ENCODE measurements at regions of chr6 and their contacts with region 1.

Region 1: DNA sequence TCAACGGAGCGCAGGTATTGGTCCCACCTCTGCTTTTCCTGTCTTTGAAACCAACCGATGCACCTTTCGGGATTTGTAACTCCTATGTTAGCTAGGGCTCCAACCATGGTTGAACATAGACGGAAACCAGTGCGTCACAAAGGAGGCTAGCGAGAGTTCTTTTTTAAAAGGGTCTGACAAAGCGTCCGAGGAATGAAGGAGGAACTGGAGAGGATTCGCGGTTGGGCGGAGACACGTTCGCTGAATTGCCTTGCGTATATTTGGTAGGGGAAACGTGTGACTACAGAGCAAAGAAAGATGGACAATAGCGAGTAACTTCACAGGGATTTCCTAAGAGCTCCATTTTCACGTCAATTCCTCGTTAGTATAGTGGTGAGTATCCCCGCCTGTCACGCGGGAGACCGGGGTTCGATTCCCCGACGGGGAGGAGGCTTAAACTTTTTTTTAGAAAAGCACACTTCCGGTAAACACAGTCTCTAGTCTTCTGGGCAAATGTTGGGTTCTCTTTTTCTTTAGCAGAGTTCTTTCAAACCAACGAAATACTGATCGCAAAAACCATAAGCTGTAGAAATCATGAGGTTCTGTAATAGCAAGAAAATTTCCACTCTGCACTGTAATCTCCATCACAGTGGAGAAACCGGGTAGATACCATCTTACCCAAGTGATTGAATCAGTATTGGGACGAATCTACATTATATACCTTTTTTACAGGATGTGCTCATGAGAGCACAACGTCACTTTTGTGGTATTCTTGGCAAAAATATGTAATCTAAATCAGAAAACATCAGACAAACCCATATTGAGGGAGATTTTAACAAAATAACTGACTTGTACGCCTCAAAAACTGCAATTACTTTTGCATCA is 6.6 kb upstream of the ZNF184 start:
- DNase-seq: peak; percentile 84 to 97 (median 95)
- ATAC-seq: peak; percentile 83
- H3K4me3 ChIP-seq: peak overlapping the region; percentile 95
- H3K4me3 Mint-ChIP-seq: no peak overlapping the region
- H3K27ac ChIP-seq: peak overlapping the region; percentile 97
- H3K27ac Mint-ChIP-seq: no peak overlapping the region
- H3K4me1 ChIP-seq: peaks cover 9 to 12% of the 10 kb centered on the region in 2 donors
- H3K4me1 Mint-ChIP-seq: peaks cover 0 to 9% (median 5%) of the 10 kb centered on the region in 7 donors
- H3K27me3 ChIP-seq: no peaks in the 10 kb centered on the region
- H3K27me3 Mint-ChIP-seq: peaks cover 0 to 17% (median 0%) of the 10 kb centered on the region in 5 donors

Region 2: GRCh38 chr6:26312501-26313390 is 1166.8 kb before region 1 on chr6:
- CTCF ChIA-PET with region 1: no interaction called
- POLR2A ChIA-PET with region 1: no interaction called
- intact Hi-C with region 1: loop called in 1 of 2 experiments (anchors 2 kb)
- DNase-seq: peak; percentile 64 to 91 (median 86)
- ATAC-seq: peak; percentile 75
- H3K4me3 ChIP-seq: peak overlapping the region; percentile 81
- H3K4me3 Mint-ChIP-seq: peak overlapping the region; percentile 83 to 100 (median 96)
- H3K27ac ChIP-seq: peak overlapping the region; percentile 55
- H3K27ac Mint-ChIP-seq: peak overlapping the region; percentile 82 to 100 (median 96)
- H3K4me1 ChIP-seq: peaks cover 4 to 19% of the 10 kb centered on the region in 2 donors
- H3K4me1 Mint-ChIP-seq: peaks cover 5 to 51% (median 37%) of the 10 kb centered on the region in 7 donors
- H3K27me3 ChIP-seq: no peaks in the 10 kb centered on the region
- H3K27me3 Mint-ChIP-seq: peaks cover 0 to 8% (median 0%) of the 10 kb centered on the region in 5 donors

Region 3: DNA sequence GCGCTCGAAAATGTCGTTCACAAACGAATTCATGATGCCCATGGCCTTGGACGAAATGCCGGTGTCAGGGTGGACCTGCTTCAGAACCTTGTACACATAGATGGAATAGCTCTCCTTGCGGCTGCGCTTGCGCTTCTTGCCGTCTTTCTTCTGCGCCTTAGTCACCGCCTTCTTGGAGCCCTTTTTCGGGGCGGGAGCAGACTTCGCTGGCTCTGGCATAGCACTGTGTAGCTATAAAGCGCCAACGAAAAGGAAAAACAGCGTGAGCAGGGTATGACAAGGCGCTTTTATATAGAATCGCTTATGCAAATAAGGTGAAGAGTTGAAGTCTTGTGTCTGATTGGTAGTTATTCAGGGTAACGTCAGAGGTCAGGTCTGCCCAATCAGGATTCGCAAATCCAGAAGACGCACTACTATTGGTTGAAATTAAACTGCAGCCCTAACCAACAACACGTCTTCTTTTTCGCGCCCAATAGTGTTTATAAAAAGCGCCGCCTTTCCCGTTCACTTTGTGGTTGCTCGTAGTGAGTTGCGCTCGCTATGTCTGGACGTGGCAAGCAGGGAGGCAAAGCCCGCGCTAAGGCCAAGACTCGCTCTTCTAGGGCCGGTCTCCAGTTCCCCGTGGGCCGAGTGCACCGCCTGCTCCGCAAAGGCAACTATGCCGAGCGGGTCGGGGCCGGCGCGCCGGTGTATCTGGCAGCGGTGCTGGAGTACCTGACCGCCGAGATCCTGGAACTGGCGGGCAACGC is 346.8 kb before region 1 on chr6:
- CTCF ChIA-PET with region 1: no interaction called
- POLR2A ChIA-PET with region 1: interaction called, 10 read pairs
- intact Hi-C with region 1: loop called (anchors 1 to 2 kb)
- DNase-seq: peak; percentile 73 to 99 (median 97)
- ATAC-seq: peak; percentile 93
- H3K4me3 ChIP-seq: peak overlapping the region; percentile 90
- H3K4me3 Mint-ChIP-seq: no peak overlapping the region
- H3K27ac ChIP-seq: peak overlapping the region; percentile 81
- H3K27ac Mint-ChIP-seq: no peak overlapping the region
- H3K4me1 ChIP-seq: peaks cover 10 to 18% of the 10 kb centered on the region in 2 donors
- H3K4me1 Mint-ChIP-seq: peaks cover 6 to 49% (median 21%) of the 10 kb centered on the region in 7 donors
- H3K27me3 ChIP-seq: no peaks in the 10 kb centered on the region
- H3K27me3 Mint-ChIP-seq: no peaks in the 10 kb centered on the region

Region 4: GRCh38 chr6:27374824-27375612 is 104.5 kb before region 1 on chr6:
- CTCF ChIA-PET with region 1: no interaction called
- POLR2A ChIA-PET with region 1: interaction called, 4 read pairs
- intact Hi-C with region 1: loop called in 1 of 2 experiments (anchors 1 kb)
- DNase-seq: peak; percentile 31 to 68 (median 62)
- ATAC-seq: peak; percentile 98
- H3K4me3 ChIP-seq: peak overlapping the region; percentile 81
- H3K4me3 Mint-ChIP-seq: peak overlapping the region; percentile 68 to 94 (median 92)
- H3K27ac ChIP-seq: peak overlapping the region; percentile 68
- H3K27ac Mint-ChIP-seq: peak overlapping the region in 8 of 9 donors; percentile 81 to 93 (median 87)
- H3K4me1 ChIP-seq: peaks cover 13 to 17% of the 10 kb centered on the region in 2 donors
- H3K4me1 Mint-ChIP-seq: peaks cover 16 to 35% (median 28%) of the 10 kb centered on the region in 7 donors
- H3K27me3 ChIP-seq: no peaks in the 10 kb centered on the region
- H3K27me3 Mint-ChIP-seq: peaks cover 0 to 6% (median under 1%) of the 10 kb centered on the region in 5 donors

Region 5: GRCh38 chr6:27687154-27688013 is 207.8 kb after region 1 on chr6:
- CTCF ChIA-PET with region 1: interaction called, 4 read pairs
- POLR2A ChIA-PET with region 1: interaction called, 5 read pairs
- intact Hi-C with region 1: loop called (anchors 1 to 10 kb)
- DNase-seq: peak; percentile 57 to 79 (median 65)
- ATAC-seq: peak; percentile 81
- H3K4me3 ChIP-seq: peak overlapping the region; percentile 88
- H3K4me3 Mint-ChIP-seq: peak overlapping the region; percentile 87 to 96 (median 94)
- H3K27ac ChIP-seq: peak overlapping the region; percentile 61
- H3K27ac Mint-ChIP-seq: peak overlapping the region; percentile 86 to 100 (median 97)
- H3K4me1 ChIP-seq: peaks cover 4 to 6% of the 10 kb centered on the region in 2 donors
- H3K4me1 Mint-ChIP-seq: peaks cover 7 to 40% (median 27%) of the 10 kb centered on the region in 7 donors
- H3K27me3 ChIP-seq: no peaks in the 10 kb centered on the region
- H3K27me3 Mint-ChIP-seq: peaks cover 5 to 34% (median 5%) of the 10 kb centered on the region in 5 donors

Region 6: DNA sequence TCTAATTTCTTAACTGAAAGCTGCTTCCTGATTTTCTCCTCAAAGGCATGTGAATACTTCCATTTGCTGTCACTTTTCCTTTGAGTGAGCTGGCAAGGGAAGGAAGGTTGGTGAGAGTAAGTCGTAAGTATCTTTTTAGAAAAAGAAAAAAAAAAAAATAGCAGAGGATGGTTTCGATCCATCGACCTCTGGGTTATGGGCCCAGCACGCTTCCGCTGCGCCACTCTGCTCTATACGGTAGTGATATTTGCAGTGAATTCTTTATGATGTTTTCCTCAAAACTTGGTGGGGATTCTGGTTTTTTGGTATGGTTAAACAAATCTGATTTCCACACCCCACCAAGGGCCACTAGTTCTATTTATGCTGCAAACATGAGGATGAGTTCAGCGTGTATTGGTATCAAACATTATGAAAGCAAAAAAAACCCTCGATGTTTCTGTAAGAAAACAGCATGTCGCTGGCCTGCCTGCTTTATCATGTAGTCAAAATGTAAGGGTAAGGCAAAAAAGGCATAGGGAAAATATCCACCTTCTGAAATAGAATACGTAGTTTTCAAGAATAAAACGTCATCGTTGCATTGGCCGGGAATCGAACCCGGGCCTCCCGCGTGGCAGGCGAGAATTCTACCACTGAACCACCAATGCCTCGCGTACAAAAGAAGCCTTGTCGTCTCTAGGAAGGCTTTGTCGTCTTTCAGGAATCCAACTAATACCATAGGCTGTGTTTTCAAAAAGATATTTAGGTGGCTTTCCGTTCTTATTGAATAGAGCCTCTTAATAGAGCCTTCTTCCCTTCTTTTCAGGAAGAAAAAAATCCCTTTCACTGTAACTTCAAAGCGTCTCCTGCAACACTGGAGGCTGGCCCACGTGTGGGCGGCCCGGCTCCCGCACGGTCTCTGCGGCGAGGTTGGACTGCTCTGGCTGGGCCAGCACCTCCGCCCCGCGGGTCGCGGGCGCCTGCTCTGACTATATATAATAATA is 423.1 kb after region 1 on chr6:
- CTCF ChIA-PET with region 1: no interaction called
- POLR2A ChIA-PET with region 1: interaction called, 3 read pairs
- intact Hi-C with region 1: loop called (anchors 1 to 2 kb)
- DNase-seq: peak; percentile 75 to 94 (median 90)
- ATAC-seq: peak; percentile 92
- H3K4me3 ChIP-seq: peak overlapping the region; percentile 95
- H3K4me3 Mint-ChIP-seq: peak overlapping the region; percentile 75 to 97 (median 91)
- H3K27ac ChIP-seq: peak overlapping the region; percentile 82
- H3K27ac Mint-ChIP-seq: peak overlapping the region; percentile 95 to 99 (median 99)
- H3K4me1 ChIP-seq: peaks cover 0 to 3% of the 10 kb centered on the region in 2 donors
- H3K4me1 Mint-ChIP-seq: peaks cover 0 to 26% (median 15%) of the 10 kb centered on the region in 7 donors
- H3K27me3 ChIP-seq: no peaks in the 10 kb centered on the region
- H3K27me3 Mint-ChIP-seq: peaks cover 4 to 35% (median 13%) of the 10 kb centered on the region in 5 donors

Region 7: DNA sequence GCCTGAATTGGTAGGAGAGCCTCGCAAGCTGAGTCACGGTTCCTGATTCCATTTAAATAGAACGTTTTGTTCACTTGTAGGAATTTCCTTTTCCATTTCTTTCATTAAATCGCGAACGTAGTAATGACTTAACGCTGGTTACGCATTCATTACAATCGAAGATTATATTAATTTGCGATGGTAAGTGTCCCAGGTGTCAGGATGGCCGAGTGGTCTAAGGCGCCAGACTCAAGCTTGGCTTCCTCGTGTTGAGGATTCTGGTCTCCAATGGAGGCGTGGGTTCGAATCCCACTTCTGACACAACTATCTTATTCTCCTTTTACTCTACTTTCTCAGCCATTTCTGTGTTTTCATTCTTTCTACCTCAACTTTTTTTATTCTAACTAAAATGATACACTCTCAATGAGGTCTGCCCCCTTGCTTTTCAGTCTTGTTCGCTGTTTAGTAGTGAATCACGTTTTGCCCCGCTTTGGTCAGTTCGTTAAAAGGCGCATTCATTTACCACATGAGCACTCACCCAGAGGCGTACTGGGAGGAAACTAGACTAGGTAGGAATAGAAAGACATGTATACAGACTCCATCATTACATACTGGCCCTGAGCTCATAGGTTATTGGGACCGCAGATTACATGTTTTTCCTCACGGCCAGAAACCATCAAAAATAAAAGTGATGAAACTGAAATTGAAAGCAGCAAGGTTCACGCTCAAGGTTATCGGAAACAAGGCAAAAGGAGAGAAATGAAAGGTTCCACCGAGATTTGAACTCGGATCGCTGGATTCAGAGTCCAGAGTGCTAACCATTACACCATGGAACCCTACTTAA is 1461.5 kb after region 1 on chr6:
- CTCF ChIA-PET with region 1: no interaction called
- POLR2A ChIA-PET with region 1: no interaction called
- intact Hi-C with region 1: loop called (anchors 2 to 10 kb)
- DNase-seq: peak; percentile 35 to 90 (median 83)
- ATAC-seq: peak; percentile 76
- H3K4me3 ChIP-seq: peak overlapping the region; percentile 82
- H3K4me3 Mint-ChIP-seq: peak overlapping the region; percentile 86 to 99 (median 92)
- H3K27ac ChIP-seq: peak overlapping the region; percentile 60
- H3K27ac Mint-ChIP-seq: peak overlapping the region; percentile 90 to 99 (median 94)
- H3K4me1 ChIP-seq: peaks cover 22 to 30% of the 10 kb centered on the region in 2 donors
- H3K4me1 Mint-ChIP-seq: peaks cover 34 to 64% (median 56%) of the 10 kb centered on the region in 7 donors
- H3K27me3 ChIP-seq: no peaks in the 10 kb centered on the region
- H3K27me3 Mint-ChIP-seq: peaks cover 0 to 6% (median 0%) of the 10 kb centered on the region in 5 donors